ENCODE measurements at regions of chr2 and their contacts with region 1.

Region 1: GRCh38 chr2:98835831-98836385 is 100.1 kb downstream of the CRACDL start:
- DNase-seq: no peak
- H3K4me3 ChIP-seq: no peak overlapping the region
- H3K4me1 ChIP-seq: no peaks in the 10 kb centered on the region
- H3K27me3 ChIP-seq: no peaks in the 10 kb centered on the region

Region 2: DNA sequence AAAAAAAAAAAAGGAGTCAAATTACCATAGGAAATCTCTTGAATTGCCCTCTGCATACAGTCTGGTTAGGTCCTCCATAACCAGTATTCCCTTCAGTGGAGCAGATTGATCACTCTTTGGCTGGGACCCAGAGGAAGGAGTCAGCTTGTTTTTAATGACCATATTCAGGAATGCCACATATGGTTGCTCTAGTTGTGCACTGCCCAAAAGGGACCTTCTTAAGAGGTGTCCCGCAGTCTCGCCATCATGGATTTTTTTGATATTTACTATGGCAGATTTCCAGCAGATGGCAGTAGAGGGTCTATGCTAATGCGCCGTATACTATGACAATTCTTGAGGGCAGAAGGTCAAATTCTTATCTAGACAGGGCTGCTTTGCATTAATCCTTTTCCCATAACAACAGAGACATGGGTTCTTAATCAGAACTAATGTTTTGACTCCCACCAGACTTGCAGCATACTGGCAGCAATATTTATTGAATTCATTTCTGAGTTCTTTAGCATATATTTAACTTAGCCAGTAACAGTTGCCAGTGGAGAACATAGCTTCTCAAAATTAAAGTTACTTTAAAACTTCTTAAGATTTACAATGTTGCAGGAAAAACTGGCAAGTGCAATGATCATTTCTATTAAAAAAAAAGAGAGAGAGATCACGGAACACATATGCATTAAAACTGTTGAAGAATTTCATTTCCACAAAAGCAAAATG is 423.0 kb before region 1 on chr2:
- in situ Hi-C with region 1: loop called (anchors 25 kb)
- DNase-seq: peak; percentile 70 to 78
- H3K4me3 ChIP-seq: no peak overlapping the region
- H3K4me1 ChIP-seq: no peaks in the 10 kb centered on the region
- H3K27me3 ChIP-seq: no peaks in the 10 kb centered on the region

Region 3: DNA sequence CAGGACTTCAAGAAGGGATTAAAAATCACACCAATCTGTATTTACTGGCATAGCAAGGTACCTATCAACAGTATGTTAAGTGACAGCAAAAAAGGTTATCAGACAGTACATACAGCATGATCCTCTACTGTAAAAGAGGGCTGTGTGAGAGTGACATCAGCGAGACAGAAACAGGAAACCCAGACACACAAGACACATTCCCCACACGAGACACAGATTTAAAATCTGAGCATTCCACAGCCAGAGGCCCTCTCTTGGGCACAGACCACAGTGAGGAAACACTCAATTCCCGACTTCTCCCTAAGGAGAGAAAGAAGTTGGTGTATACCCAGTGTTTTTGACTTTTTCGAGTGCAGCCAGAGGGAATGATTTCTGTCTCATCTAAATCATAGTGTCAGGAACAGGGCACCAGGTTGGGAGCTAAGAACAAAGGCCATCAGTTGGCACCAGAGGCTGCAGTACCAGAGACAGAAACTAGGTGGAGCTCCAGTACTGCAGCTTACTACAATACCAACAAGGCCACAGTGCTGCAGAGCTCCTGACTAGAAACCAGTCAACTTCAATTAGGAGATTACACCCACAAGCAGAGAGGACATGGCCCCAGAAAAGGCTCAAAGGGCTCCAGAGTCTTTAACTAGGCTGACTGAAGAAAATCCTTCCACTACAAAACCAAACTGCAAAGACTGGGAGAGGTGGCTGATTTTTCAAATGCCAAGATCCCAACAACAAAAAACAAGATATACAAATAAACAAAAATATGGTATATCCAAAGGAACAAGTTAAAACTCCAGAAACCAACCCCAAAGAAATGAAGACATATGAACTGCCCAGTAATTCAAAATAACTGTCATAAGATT is 186.5 kb before region 1 on chr2:
- in situ Hi-C with region 1: loop called (anchors 5 kb)
- DNase-seq: peak; percentile 75 to 82
- H3K4me3 ChIP-seq: no peak overlapping the region
- H3K4me1 ChIP-seq: no peaks in the 10 kb centered on the region
- H3K27me3 ChIP-seq: no peaks in the 10 kb centered on the region

Measured in HAP-1 (cell line).